PC-9 (cell line): ENCODE measurements at regions of chr1 and their contacts with region 1.

Region 1: GRCh38 chr1:43206600-43207228 is 34.6 kb downstream of the CFAP57 start:
- DNase-seq: peak; percentile 94 to 98
- H3K4me3 ChIP-seq: peak overlapping the region; percentile 39
- H3K27ac ChIP-seq: peak overlapping the region; percentile 95
- H3K4me1 ChIP-seq: peaks cover 40% of the 10 kb centered on the region
- H3K27me3 ChIP-seq: no peaks in the 10 kb centered on the region
- CTCF ChIP-seq: no peak

Region 2: DNA sequence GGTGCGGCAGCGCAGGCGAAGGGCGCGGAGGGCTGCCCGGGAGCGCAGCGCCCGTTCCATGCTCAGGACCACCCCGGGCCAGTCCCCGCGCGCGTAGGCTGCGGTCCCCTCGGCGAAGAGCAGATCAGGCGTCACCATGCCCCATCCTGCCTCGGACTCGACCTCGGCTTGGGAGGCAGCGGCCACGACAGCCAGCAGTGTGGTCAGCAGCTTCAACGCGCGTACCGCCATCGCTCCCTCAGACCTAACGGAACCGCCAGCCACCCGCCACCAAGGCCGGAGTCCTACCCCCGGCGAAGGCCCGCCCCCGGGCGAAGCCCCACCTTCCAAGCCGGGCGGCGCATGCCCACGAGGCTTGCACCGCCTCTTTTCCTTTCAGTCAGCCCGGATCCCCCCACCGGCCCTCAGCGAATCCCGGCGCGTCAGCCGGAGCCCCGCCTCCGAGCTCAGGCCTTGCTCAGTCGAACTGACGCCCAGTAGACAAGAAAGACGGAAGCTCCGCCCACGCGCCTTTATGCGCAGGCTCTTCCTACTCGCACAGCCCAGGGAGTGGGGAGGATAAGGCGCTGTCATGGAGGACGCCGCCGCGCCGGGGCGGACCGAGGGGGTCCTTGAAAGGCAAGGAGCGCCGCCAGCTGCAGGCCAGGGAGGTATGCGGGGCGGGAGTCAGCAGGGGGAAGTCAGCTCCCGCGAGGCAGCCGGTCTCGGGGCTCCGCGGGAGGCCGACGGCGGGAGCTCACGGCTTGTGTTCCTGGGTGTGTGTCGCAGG is 439.8 kb before region 1 on chr1 and contains the starts of genes C1orf50 and P3H1:
- CTCF ChIA-PET with region 1: no interaction called
- POLR2A ChIA-PET with region 1: interaction called, 5 read pairs
- intact Hi-C with region 1: loop called (anchors 2 kb)
- DNase-seq: peak; percentile 96 to 100
- H3K4me3 ChIP-seq: peak within 1 kb of the TSS; percentile 86
- H3K27ac ChIP-seq: no peak within 1 kb of the TSS
- H3K4me1 ChIP-seq: peaks cover 24% of the 10 kb centered on the region
- H3K27me3 ChIP-seq: no peaks in the 10 kb centered on the region
- CTCF ChIP-seq: no peak
- total RNA-seq, gene C1orf50: 5.6 and 8.3 TPM in 2 replicates
- total RNA-seq, gene P3H1: 22.8 and 45.5 TPM in 2 replicates

Region 3: DNA sequence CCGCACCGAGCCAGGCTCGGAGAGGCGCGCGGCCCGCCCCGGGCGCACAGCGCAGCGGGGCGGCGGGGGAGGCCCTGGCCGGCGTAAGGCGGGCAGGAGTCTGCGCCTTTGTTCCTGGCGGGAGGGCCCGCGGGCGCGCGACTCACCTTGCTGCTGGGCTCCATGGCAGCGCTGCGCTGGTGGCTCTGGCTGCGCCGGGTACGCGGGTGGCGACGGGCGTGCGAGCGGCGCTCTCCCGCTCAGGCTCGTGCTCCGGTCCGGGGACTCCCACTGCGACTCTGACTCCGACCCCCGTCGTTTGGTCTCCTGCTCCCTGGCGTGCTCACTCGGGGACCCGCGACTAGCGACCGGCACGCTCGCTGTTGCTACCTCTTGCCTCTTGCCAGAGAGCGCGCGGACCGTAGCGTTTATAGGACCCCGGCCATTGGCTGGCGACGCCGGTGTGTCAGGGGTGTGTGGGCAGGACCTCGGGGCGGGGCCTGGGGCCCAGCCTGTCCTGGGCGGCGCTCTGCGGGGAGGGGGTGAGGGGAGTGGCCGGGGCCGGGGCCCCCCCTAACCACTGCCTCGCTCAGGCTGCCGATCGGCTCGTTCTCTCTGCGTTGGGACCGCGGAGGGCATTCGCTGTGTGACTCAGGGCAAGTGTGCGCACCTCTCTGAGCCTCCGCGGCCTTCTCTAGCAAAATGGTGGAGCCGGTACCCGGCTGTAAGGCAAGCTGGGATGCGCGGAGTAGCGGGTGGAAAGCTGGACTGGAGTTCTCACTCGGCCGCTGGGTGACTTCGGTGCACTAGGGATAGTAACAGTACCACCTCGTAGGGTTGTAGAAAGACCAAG is 248.0 kb before region 1 on chr1 and contains the start of gene SLC2A1:
- CTCF ChIA-PET with region 1: no interaction called
- POLR2A ChIA-PET with region 1: interaction called, 33 read pairs
- intact Hi-C with region 1: no loop called
- DNase-seq: peak; percentile 81 to 97
- H3K4me3 ChIP-seq: peak within 1 kb of the TSS; percentile 98
- H3K27ac ChIP-seq: peak within 1 kb of the TSS; percentile 76
- H3K4me1 ChIP-seq: peaks cover 61% of the 10 kb centered on the region
- H3K27me3 ChIP-seq: no peaks in the 10 kb centered on the region
- CTCF ChIP-seq: no peak
- total RNA-seq, gene SLC2A1: 327 and 337 TPM in 2 replicates

Region 4: DNA sequence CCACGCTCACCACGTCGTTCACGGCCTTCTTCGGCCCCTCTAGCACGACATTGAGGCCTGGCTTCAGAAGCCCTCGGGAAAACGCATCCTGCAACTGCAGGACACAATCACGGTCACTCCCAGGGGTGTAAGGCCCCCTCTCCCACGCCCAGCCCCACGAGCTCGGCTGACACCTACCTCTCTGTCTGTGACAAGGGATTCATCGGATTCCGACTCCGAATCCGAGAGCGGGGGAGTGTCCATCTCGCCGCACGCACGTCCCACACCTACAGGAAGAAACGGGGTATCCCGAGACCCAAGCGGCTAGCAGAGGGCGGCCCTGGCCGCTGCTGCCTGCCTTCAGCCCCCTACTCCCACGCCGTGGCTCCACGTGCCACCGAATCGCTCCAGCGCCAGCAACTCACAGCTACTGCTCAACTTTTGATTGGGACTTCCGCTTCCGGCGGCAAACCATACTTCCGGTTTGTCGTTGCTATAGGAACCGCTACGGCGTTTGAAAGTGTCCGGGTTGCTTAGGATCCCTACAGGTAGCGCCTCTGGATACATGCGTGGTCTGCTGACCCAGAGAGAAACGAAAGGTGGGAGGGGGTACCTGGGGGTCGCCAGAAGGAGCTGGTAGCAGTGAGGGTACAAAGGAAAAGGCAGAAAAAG is 34.7 kb before region 1 on chr1 and contains the starts of genes CFAP57 and EBNA1BP2:
- CTCF ChIA-PET with region 1: no interaction called
- POLR2A ChIA-PET with region 1: interaction called, 16 read pairs
- intact Hi-C with region 1: loop called (anchors 1 kb)
- DNase-seq: peak; percentile 90 to 94
- H3K4me3 ChIP-seq: peak within 1 kb of the TSS; percentile 89
- H3K27ac ChIP-seq: peak within 1 kb of the TSS; percentile 32
- H3K4me1 ChIP-seq: peaks cover 15% of the 10 kb centered on the region; the same call in 1 of the 2 replicates
- H3K27me3 ChIP-seq: no peaks in the 10 kb centered on the region
- CTCF ChIP-seq: no peak
- total RNA-seq, gene CFAP57: 1.6 and 1.7 TPM in 2 replicates
- total RNA-seq, gene EBNA1BP2: 151 and 153 TPM in 2 replicates

Region 5: DNA sequence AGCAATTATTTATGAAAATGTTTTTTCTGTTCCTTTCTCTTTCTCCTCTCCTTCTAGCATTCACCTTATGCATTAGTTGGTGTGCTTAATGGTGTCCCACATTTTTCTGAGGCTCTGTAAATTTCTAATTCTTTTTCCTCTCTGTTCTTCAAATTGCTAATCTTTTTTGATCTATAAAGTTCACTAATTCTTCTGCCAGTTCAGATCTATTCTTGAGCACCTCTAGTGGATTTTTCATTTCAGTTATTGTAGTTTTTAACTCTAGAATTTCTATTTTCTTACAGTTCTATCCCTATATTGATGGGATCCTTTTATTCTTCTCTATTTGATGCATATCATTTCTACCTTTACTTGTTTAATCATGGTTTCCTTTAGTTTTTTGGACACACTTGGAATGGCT is 12.2 kb before region 1 on chr1:
- CTCF ChIA-PET with region 1: no interaction called
- POLR2A ChIA-PET with region 1: no interaction called
- intact Hi-C with region 1: no loop called
- DNase-seq: no peak
- H3K4me3 ChIP-seq: no peak overlapping the region
- H3K27ac ChIP-seq: no peak overlapping the region
- H3K4me1 ChIP-seq: no peaks in the 10 kb centered on the region
- H3K27me3 ChIP-seq: no peaks in the 10 kb centered on the region
- CTCF ChIP-seq: no peak

Region 6: DNA sequence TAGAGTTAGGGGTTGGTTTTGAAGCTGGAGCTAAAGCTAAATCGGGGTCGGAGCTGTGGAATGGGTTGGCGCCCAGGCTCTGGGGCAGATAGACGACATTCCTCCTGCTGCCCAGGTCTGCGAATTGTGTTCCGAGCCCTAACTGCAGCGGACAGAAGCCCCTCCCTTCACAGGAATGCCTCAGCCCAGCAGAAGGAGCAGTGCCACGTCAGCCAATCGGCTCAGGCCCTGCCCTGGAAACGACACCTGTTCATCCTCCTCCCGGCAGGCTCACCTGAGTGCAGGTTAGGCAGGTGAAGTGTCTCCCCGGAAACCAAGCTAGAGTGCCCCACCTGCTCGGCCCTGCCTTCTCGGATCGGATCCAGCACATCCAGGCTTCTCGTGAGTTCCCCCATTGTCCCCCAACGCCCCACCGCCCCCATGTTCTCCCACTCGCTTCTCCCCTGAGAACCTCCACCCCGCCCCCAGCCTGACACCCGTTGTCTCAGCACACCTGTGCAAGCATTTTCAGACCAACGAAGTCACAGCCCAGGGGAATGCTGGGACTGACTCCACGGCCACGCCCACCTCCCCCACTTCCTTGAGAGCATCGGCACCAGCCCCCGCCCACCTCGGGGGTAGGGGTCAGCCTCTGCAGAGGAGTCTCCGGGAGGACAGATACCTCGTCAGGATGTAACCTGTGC is 63.8 kb after region 1 on chr1:
- CTCF ChIA-PET with region 1: no interaction called
- POLR2A ChIA-PET with region 1: interaction called, 11 read pairs
- intact Hi-C with region 1: loop called (anchors 2 kb)
- DNase-seq: peak; percentile 94 to 96
- H3K4me3 ChIP-seq: peak overlapping the region; percentile 59
- H3K27ac ChIP-seq: peak overlapping the region; percentile 81
- H3K4me1 ChIP-seq: peaks cover 25% of the 10 kb centered on the region
- H3K27me3 ChIP-seq: no peaks in the 10 kb centered on the region
- CTCF ChIP-seq: no peak

Region 7: GRCh38 chr1:43316738-43317520 is 110.2 kb after region 1 on chr1:
- CTCF ChIA-PET with region 1: no interaction called
- POLR2A ChIA-PET with region 1: no interaction called
- intact Hi-C with region 1: no loop called
- DNase-seq: no peak
- H3K4me3 ChIP-seq: no peak overlapping the region
- H3K27ac ChIP-seq: no peak overlapping the region
- H3K4me1 ChIP-seq: peaks cover 8% of the 10 kb centered on the region
- H3K27me3 ChIP-seq: no peaks in the 10 kb centered on the region
- CTCF ChIP-seq: 0 out of 2 replicates have a peak, but pooled peaks have one; percentile 27

Region 8: GRCh38 chr1:43334453-43335205 is 127.9 kb after region 1 on chr1:
- CTCF ChIA-PET with region 1: no interaction called
- POLR2A ChIA-PET with region 1: no interaction called
- intact Hi-C with region 1: no loop called
- DNase-seq: no peak
- H3K4me3 ChIP-seq: no peak overlapping the region
- H3K27ac ChIP-seq: no peak overlapping the region
- H3K4me1 ChIP-seq: peaks cover 13% of the 10 kb centered on the region
- H3K27me3 ChIP-seq: no peaks in the 10 kb centered on the region
- CTCF ChIP-seq: no peak

Region 9: GRCh38 chr1:43383449-43383848 is 176.7 kb after region 1 on chr1:
- CTCF ChIA-PET with region 1: no interaction called
- POLR2A ChIA-PET with region 1: interaction called, 34 read pairs
- intact Hi-C with region 1: no loop called
- DNase-seq: peak in 1 of 2 experiments; percentile 33
- H3K4me3 ChIP-seq: no peak overlapping the region
- H3K27ac ChIP-seq: no peak overlapping the region
- H3K4me1 ChIP-seq: peaks cover 12% of the 10 kb centered on the region
- H3K27me3 ChIP-seq: no peaks in the 10 kb centered on the region
- CTCF ChIP-seq: peak; percentile 55; the same call in 1 of the 2 replicates

Region 10: DNA sequence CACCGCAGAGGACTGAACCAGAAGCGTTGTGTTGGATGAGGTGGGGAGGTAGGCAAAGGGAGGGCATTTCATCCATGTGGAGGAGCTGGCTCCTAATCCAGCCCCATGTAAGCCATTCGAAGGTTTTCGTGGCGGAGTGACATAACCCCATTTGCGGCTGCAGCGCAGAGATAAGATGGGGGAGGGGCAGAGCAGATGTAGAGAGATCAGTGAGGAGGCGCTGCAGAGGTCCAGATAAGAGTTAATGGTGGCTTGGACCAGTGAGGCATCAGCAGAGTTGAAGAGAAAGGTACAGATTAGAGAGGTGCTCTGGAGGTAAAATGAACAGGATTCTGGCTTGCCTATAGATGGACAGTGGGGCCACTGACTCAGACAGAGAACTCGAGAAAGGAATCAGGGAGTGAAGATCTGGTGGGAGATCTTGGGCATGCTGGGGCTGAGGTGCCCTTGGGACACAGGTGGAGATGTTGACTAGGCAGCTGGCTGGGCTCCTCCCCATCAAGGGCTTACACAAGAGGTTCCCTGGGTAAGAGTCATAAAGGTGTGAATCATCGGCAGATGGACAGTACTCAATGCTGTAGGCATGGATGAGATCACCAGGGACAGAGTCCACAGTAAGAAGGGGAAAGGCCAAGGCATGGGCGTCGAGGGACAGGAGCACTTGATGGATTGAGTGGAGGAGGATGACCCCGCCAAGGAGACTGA is 316.2 kb after region 1 on chr1:
- CTCF ChIA-PET with region 1: no interaction called
- POLR2A ChIA-PET with region 1: interaction called, 20 read pairs
- intact Hi-C with region 1: no loop called
- DNase-seq: peak; percentile 83 to 97
- H3K4me3 ChIP-seq: no peak overlapping the region
- H3K27ac ChIP-seq: peak overlapping the region; percentile 50
- H3K4me1 ChIP-seq: peaks cover 25% of the 10 kb centered on the region
- H3K27me3 ChIP-seq: no peaks in the 10 kb centered on the region
- CTCF ChIP-seq: no peak

Region 11: DNA sequence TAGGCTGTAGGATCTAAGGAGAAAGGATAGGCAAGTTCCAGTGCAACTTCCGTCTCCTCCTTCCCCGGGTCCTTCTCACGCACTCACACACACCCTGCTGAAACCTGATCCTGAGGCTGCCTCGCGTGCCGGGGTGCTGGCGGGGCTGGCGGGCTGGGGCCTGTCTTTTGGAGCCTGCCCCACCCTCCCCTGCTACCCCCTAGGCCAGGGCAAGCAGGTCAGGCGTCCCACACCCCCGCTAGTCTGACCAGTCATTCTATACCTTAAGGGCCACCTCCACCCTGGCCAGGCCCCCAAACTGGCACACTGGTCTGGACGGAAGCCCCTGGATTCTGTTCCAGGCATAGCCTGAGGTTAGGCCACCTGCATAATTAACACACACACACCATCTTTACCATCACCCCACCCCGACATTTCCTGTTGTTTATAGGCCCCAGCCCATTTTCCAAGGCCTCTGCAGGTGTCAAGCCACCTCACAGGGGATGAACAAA is 678.6 kb after region 1 on chr1:
- CTCF ChIA-PET with region 1: no interaction called
- POLR2A ChIA-PET with region 1: no interaction called
- intact Hi-C with region 1: no loop called
- DNase-seq: peak in 1 of 2 experiments; percentile 32
- H3K4me3 ChIP-seq: no peak overlapping the region
- H3K27ac ChIP-seq: no peak overlapping the region
- H3K4me1 ChIP-seq: 0 out of 2 replicates have a peak, but pooled peaks cover 3% of the 10 kb centered on the region
- H3K27me3 ChIP-seq: no peaks in the 10 kb centered on the region
- CTCF ChIP-seq: no peak